AG04449 (cell line): ENCODE measurements at regions of chr4 and their contacts with region 1.

Region 1: DNA sequence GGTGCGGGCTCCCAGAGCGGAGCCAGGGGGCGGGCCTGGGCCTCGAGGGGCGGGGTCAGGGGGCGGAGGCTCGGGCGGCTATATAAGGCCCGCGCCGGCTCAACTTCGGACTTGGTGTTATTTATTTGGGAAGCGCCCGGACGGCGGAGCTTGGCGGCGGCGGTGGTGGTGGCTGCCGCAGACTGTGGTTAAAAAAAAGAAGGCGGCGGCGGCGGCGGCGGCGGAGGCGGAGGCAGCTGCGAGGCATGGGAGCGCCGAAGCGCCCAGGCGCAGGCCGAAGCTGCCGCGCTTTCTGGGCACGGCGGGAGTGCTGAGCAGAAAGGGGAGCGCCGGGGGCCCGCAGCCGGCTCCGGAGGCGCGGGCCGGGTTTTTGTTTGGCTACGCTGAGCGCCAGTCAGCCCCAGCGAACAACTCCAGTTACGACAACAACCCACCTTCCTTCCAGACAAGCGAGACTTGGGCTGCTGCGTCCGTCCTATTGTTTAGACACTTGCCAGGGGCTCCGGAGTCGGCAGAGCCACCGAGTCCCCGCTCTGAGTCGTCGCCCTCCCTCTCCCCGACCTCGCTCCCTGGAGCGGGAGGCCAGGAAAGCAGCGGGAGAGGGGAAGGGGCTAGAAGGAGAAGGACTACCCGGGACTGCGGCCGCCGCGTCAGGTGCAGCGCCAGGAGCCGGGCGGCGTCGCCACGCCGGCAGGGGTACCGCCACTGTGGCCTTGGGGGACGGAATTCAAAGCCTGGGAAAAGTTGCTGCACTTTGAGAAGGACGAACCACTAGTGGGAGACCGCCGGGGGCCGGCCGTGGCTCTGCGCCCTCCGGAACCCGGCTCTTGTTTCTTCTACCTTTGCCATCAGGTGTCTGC is at the start of gene SLIT2:
- DNase-seq: no peak
- H3K4me3 ChIP-seq: peak within 1 kb of the TSS; percentile 75
- CTCF ChIP-seq: peak; percentile 31

Region 2: DNA sequence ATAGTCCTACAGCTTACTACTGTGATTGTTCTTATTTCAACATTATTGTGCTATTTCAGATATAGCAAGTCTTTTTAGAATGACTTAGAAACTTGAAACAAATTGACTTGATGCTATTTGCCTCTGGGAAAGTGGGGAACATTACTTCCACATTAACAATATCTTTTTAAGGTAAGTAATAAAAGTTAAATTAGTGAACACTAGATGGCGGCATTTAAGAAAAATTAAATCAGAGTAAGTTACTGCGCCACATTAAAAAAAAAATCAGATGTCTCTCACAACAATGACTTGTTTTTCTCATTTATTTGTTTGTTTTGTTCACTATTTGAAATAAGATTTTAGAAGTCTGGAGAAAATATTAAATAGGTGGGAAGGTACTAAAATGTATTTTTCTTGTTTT is 1027.2 kb before region 1 on chr4:
- CTCF ChIA-PET with region 1: interaction called, 13 read pairs
- POLR2A ChIA-PET with region 1: no interaction called
- DNase-seq: no peak
- H3K4me3 ChIP-seq: no peak overlapping the region
- CTCF ChIP-seq: no peak

Region 3: GRCh38 chr4:19309378-19309777 is 942.6 kb before region 1 on chr4:
- CTCF ChIA-PET with region 1: interaction called, 35 read pairs
- POLR2A ChIA-PET with region 1: interaction called, 3 read pairs
- DNase-seq: no peak
- H3K4me3 ChIP-seq: no peak overlapping the region
- CTCF ChIP-seq: peak; percentile 34

Region 4: GRCh38 chr4:20237894-20238537 is 14.0 kb before region 1 on chr4:
- CTCF ChIA-PET with region 1: interaction called, 14 read pairs
- POLR2A ChIA-PET with region 1: no interaction called
- DNase-seq: no peak
- H3K4me3 ChIP-seq: no peak overlapping the region
- CTCF ChIP-seq: no peak

Region 5: GRCh38 chr4:20266215-20267082 is 14.4 kb after region 1 on chr4:
- CTCF ChIA-PET with region 1: interaction called, 21 read pairs
- POLR2A ChIA-PET with region 1: no interaction called
- DNase-seq: no peak
- H3K4me3 ChIP-seq: no peak overlapping the region
- CTCF ChIP-seq: no peak

Region 6: DNA sequence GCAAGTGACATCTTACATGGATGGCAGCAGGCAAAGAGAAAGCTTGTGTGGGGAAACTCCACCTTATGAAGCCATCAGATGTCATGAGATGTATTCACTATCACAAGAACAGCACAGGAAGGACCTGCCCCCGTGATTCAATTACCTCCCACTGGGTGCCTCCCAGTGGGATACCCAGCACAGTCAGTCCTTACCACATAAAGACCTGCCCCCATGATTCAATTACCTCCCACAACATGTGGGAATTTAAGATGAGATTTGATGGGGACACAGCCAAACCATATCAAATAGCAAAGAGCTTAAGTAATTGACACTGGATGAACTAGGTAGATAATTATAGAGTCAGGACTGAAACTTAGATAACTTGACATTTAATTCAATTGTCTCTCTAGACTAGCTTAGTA is 85.2 kb after region 1 on chr4:
- CTCF ChIA-PET with region 1: no interaction called
- POLR2A ChIA-PET with region 1: no interaction called
- DNase-seq: no peak
- H3K4me3 ChIP-seq: no peak overlapping the region
- CTCF ChIP-seq: no peak

Region 7: GRCh38 chr4:20354120-20354519 is 102.1 kb after region 1 on chr4:
- CTCF ChIA-PET with region 1: no interaction called
- POLR2A ChIA-PET with region 1: no interaction called
- DNase-seq: no peak
- H3K4me3 ChIP-seq: no peak overlapping the region
- CTCF ChIP-seq: no peak

Region 8: DNA sequence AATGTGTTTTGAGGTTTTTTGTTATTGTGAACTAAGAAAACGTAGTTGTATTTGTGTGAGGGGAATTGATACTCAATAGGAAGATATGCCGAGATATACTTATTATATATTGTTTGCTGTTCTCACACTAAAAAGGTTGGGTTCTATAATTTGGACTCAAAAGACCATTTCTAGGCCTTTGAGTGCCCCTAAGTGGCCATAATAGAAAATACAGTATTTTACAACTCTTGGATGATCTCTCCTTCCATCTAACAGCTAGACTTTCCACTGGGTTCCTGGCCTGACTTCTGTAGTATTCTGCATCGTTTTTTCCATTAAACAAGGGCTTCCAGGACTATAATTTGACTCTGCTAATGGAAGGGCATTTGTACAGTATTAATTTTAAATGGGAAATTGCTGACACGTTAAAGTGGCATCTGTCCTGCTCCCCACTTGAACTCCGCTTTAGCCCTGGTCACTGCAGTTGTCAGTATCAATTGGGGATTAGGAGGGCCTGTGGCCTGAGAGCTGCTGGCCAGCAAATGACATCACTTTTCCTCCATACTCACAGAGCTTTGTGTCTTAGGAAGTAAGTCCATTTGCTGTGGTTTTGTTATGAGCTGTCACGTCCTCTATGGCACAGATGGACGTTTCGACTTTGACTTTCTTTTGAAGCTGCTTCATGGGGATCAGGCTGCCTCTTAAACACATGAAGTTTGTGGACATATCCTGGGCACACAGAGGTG is 176.6 kb after region 1 on chr4:
- CTCF ChIA-PET with region 1: interaction called, 41 read pairs
- POLR2A ChIA-PET with region 1: no interaction called
- DNase-seq: no peak
- H3K4me3 ChIP-seq: no peak overlapping the region
- CTCF ChIP-seq: peak; percentile 9